ENCODE measurements at regions of chr16 and their contacts with region 1.

Region 1: DNA sequence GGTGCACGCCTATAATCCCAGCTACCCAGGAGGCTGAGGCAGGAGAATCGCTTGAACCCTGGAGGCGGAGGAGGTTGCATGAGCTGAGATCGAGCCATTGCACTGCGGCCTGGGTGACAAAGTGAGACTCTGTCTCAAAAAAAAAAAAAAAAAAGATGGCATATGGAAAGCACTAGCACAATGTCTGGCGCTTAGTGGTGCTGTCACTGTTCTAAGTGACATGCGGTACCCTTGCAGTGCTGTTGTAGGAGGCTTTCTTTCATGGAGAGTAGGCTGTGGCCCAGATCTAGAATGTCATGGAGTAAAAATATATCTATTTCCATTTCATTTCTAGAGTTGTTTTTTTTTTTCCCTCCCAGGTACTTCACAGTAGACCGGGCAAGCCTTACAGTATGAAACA is 14.6 kb upstream of the METTL9 start:
- DNase-seq: no peak
- H3K4me3 Mint-ChIP-seq: no peak overlapping the region
- H3K27ac Mint-ChIP-seq: no peak overlapping the region
- H3K4me1 Mint-ChIP-seq: no peaks in the 10 kb centered on the region
- H3K27me3 Mint-ChIP-seq: peaks cover 10% of the 10 kb centered on the region

Region 2: GRCh38 chr16:21565861-21566669 is 18.8 kb before region 1 on chr16:
- intact Hi-C with region 1: no loop called
- DNase-seq: no peak
- H3K4me3 Mint-ChIP-seq: no peak overlapping the region
- H3K27ac Mint-ChIP-seq: no peak overlapping the region
- H3K4me1 Mint-ChIP-seq: no peaks in the 10 kb centered on the region
- H3K27me3 Mint-ChIP-seq: peaks cover 17% of the 10 kb centered on the region

Region 3: DNA sequence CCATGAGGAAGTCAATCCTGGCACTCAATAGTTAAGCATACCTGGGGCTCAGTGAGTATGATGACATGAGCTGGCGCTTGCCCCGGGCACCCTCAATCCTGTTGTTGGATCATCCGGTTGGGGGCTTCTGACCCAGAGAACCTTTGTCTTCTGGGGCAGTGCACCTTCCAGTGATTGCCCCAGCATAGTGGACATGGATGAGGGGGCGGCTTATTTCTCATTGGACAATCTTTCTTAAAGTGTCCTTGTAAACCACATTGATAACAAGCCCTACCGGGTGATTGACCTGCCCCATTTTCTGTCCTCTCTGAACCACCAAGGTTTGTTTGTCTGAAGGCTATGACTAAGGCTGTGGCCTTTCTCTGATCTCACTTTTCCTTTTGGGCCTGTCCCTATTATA is 49.4 kb after region 1 on chr16:
- intact Hi-C with region 1: no loop called
- DNase-seq: no peak
- H3K4me3 Mint-ChIP-seq: no peak overlapping the region
- H3K27ac Mint-ChIP-seq: no peak overlapping the region
- H3K4me1 Mint-ChIP-seq: peaks cover 20% of the 10 kb centered on the region
- H3K27me3 Mint-ChIP-seq: no peaks in the 10 kb centered on the region

Region 4: DNA sequence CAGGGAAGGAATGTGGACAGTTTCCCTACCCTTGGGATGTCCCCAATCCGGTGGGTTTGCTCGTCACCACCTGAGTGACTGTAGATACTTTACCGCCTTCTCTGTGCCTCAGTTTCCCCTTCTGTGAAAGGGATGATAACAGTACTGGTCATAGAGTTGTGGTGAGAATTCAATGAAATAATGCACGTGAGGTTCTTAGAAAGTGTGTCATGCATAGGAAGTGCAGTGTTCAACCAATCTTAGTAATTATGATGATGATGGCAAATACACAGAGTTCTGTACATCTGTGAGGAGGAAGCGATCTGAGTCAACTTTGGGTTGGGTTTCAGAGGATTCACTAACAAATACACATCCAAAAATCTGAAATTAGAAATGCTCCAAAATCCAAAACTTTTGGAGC is 1114.5 kb after region 1 on chr16:
- intact Hi-C with region 1: loop called (anchors 1 kb)
- DNase-seq: no peak
- H3K4me3 Mint-ChIP-seq: no peak overlapping the region
- H3K27ac Mint-ChIP-seq: no peak overlapping the region
- H3K4me1 Mint-ChIP-seq: no peaks in the 10 kb centered on the region
- H3K27me3 Mint-ChIP-seq: peaks cover 5% of the 10 kb centered on the region